Activated CD4-positive, alpha-beta T cell treated with anti-CD3 and anti-CD28 coated beads, Interleukin-2, amount 10 ng/mL, durations not matched to agents 24 days and 14 days (primary cell): ENCODE measurements at regions of chr10 and their contacts with region 1.

Region 1: GRCh38 chr10:104121520-104122224 is at the start of gene SFR1:
- DNase-seq: peak; percentile 100
- H3K4me3 Mint-ChIP-seq: peak within 1 kb of the TSS; percentile 93
- H3K27ac Mint-ChIP-seq: peak within 1 kb of the TSS; percentile 100
- H3K4me1 Mint-ChIP-seq: peaks cover 34% of the 10 kb centered on the region
- H3K27me3 Mint-ChIP-seq: peaks cover 10% of the 10 kb centered on the region
- total RNA-seq, gene SFR1: 12.1 and 13.8 TPM in 2 replicates

Region 2: DNA sequence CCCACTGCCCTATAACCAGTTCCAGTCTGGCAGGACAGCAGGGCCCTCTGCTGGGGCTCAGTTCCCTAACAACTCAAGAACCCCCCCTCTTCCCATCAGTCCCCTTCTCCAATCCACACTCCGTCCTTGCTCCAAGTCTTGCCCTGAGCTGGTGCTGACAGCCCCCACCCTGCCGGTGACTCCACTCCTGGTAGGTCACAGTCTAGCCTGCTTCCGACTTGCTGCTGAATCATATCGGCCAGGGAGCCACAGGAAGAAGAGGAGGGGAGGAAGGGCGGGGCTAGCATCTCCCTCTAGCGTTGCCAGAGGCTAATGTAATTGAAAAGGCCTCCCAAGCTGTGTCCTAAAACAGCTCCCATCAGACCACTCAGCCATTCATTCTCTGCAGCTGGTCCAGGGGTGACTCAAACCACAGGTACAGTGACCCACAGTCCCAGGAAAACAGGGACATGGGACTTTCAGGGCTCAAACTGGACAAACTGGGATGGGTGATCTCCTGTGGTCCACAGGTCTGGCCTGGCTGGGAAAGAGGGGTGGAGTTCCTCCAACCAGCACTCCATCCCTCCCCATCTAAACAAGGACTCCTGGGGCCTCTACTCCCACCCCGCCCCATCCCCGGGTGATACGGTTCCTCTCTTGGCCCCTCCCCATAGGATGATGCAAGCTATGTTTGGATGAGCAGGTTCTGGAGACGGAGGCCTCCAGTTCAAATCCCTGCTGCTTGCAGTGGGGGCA is 425.1 kb before region 1 on chr10:
- intact Hi-C with region 1: loop called (anchors 10 kb)
- DNase-seq: peak; percentile 93
- H3K4me3 Mint-ChIP-seq: peak overlapping the region; percentile 54
- H3K27ac Mint-ChIP-seq: peak overlapping the region; percentile 86
- H3K4me1 Mint-ChIP-seq: peaks cover 32% of the 10 kb centered on the region
- H3K27me3 Mint-ChIP-seq: peaks cover 2% of the 10 kb centered on the region

Region 3: DNA sequence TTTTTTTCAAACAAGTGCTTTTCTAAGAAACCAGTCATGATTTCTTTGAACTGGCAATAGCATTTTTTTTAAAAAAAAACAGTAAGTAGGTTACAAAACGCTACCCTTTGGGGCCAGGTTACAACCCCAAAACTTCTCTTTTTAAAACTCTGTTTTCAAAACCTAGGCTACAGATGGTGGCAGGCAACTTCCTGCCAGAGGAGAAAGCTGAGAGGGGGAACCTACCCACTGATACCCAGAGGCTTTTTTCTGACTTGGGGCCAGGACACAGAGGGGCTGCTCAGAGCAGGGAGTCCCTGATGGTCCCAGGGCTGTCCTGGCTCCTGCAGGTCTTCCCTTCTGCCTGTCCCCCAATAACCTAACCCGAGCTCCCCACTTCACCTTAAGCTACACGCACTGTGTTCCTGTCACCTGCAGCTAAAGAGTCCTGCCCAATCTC is 210.6 kb before region 1 on chr10:
- intact Hi-C with region 1: loop called (anchors 1 kb)
- DNase-seq: peak; percentile 91
- H3K4me3 Mint-ChIP-seq: peak overlapping the region; percentile 72
- H3K27ac Mint-ChIP-seq: peak overlapping the region; percentile 94
- H3K4me1 Mint-ChIP-seq: peaks cover 59% of the 10 kb centered on the region
- H3K27me3 Mint-ChIP-seq: no peaks in the 10 kb centered on the region

Region 4: DNA sequence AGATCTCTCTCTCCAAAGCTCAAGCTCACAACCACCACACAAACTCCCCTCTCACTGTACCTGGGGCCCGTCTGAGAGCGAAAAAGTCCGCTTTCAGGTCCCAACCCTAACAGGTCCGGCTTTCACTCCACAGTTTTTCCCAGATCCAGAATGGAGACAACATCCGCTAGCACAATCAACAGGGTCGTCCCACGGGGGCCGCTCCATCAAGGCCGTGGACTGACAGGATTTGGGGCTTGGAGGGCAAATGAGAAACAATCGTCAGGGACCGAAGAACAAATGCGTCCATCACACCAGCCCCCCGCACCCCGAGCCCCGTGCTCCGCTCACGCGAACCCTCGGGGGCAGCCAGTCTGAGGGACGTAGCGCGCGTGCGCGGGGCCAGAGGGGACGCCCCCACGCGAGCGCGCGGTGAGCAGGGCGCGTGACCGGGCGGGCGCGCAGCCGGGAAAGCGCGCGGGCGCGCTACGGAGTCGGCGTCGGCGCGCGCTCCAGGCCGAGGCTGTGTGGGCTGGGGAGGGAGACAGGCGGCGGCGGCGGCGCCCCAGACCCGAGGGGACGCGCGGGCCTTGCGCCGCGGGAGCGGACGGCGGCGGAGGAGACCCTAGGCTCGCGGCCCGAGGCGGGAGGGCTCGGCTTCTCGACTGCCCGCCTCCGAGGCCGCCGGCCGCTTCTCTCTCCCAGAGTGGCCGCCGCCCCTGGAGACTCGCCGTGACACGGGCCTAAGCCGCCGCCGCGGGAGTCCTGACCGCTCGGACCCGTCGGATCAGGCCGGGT is 154.8 kb before region 1 on chr10 and contains the start of gene SLK:
- intact Hi-C with region 1: loop called (anchors 1 kb)
- DNase-seq: peak; percentile 96
- H3K4me3 Mint-ChIP-seq: peak within 1 kb of the TSS; percentile 97
- H3K27ac Mint-ChIP-seq: peak within 1 kb of the TSS; percentile 93
- H3K4me1 Mint-ChIP-seq: peaks cover 32% of the 10 kb centered on the region
- H3K27me3 Mint-ChIP-seq: no peaks in the 10 kb centered on the region
- total RNA-seq, gene SLK: 22.9 and 27.1 TPM in 2 replicates

Region 5: DNA sequence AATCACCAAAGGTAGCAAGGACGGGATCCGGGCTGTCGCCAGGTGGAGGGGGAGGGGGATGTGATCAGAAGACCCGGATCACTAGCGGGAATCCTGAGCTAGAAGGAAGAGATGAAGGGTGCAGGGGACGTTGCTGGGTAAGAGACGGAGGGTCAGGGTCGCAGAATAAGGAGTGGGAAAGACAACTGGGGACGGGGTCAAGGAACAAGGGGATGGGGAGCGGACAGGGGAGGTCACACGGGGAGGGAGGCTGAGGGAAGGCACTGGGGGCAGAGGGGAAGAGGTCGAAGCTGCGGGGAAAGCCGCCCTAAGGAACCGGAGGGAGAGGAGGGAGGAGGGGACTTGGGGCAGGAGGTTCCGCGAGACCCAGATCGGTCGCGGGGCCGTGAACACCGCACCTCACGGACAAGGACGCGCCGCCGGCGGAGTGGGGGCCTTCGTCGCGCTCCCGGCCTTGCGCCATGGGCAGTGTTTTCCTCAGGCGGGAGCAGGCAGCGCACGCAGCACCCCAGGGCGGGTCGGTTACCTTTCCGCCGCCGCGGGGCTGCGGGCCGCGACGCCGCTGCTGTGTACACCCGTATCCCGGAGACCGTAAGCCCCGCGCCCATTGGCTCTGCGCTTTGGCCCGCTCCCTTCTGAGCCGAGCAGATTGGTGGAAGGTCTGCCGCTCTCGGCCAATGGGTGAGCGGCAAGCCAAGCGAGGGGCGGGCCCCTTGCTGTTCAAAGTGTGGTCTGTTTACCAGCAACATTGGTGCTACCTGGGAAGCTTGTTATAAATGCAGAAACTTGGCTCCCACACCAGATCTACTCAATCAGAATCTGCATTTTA is 110.3 kb after region 1 on chr10 and contains the start of gene CFAP43:
- intact Hi-C with region 1: loop called (anchors 1 kb)
- DNase-seq: peak; percentile 100
- H3K4me3 Mint-ChIP-seq: peak within 1 kb of the TSS; percentile 87
- H3K27ac Mint-ChIP-seq: peak within 1 kb of the TSS; percentile 72
- H3K4me1 Mint-ChIP-seq: peaks cover 8% of the 10 kb centered on the region
- H3K27me3 Mint-ChIP-seq: peaks cover 42% of the 10 kb centered on the region
- total RNA-seq, gene CFAP43: not detected in 2 replicates

Region 6: GRCh38 chr10:104337974-104338735 is 216.5 kb after region 1 on chr10 and contains the start of gene ITPRIP:
- intact Hi-C with region 1: loop called (anchors 5 kb)
- DNase-seq: peak; percentile 93
- H3K4me3 Mint-ChIP-seq: peak within 1 kb of the TSS; percentile 97
- H3K27ac Mint-ChIP-seq: peak within 1 kb of the TSS; percentile 100
- H3K4me1 Mint-ChIP-seq: peaks cover 51% of the 10 kb centered on the region
- H3K27me3 Mint-ChIP-seq: peaks cover 7% of the 10 kb centered on the region
- total RNA-seq, gene ITPRIP: 14.7 and 15.4 TPM in 2 replicates